Endothelial cell of umbilical vein (primary cell): ENCODE measurements at regions of chr9 and their contacts with region 1.

Region 1: GRCh38 chr9:110048403-110048975 is 159.5 kb downstream of the C9orf152 start:
- DNase-seq: peak; percentile 88
- H3K4me3 ChIP-seq: peak overlapping the region; percentile 99 to 100 (median 100)
- H3K27ac ChIP-seq: peak overlapping the region; percentile 98
- H3K4me1 ChIP-seq: peaks cover 28% of the 10 kb centered on the region
- H3K27me3 ChIP-seq: no peaks in the 10 kb centered on the region
- CTCF ChIP-seq: no peak
- POLR2A ChIP-seq: peak; percentile 96

Region 2: DNA sequence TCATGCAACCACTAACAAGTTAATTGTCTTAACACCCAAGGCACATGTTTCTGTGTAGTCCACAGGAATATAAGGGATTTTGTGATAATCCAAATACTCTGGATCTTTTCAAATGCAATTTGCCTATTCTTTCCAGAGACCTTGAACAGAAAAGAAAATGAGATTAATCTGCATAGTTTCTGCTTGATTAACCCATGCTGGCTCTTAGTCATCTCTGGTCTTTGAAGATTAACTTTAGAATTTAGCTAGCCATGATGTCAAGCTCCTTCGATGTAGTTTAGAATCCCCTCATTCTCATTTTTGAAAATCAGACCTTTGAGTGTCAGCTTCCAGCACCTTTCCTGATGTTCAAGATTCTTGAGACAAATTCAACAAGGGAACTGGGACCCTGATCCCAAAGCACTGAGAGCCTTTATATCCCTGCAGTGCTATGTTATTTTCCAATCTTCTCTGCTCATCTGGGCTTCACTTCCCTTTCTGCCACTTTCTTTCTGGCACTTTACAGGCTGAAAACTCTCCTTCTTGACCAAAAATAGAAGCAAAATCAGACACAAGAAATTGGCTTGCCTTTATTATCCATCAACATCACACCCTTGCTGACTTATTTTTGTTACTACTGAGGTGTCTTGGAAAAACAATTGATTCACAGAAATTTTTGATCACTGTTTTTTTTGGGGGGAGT is 112.9 kb before region 1 on chr9:
- CTCF ChIA-PET with region 1: no interaction called
- POLR2A ChIA-PET with region 1: no interaction called
- dilution Hi-C with region 1: no loop called
- intact Hi-C with region 1: no loop called
- DNase-seq: no peak
- H3K4me3 ChIP-seq: no peak overlapping the region
- H3K27ac ChIP-seq: no peak overlapping the region
- H3K4me1 ChIP-seq: no peaks in the 10 kb centered on the region
- H3K27me3 ChIP-seq: no peaks in the 10 kb centered on the region
- CTCF ChIP-seq: no peak
- POLR2A ChIP-seq: no peak

Region 3: DNA sequence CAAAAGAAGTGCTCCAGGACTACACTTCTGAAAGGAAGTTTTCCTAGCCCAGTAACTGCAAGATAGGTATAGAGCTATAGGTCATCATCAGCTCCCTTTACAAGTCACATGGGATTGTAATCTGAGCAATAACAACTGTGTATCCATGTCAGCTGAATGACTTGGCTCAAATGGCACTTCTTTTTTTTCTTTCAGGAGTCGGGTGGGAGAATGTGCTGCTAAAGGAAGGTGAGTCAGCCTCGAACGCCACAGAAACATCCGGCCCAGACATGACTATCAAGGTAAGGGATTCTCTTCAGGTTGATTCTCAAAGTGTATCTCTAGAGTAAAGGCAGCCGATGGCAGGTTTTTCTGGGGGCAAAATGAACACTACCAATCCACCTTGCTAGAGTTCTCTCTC is 32.7 kb before region 1 on chr9:
- CTCF ChIA-PET with region 1: no interaction called
- POLR2A ChIA-PET with region 1: interaction called, 5 read pairs
- dilution Hi-C with region 1: no loop called
- intact Hi-C with region 1: loop called (anchors 1 kb)
- DNase-seq: peak; percentile 95
- H3K4me3 ChIP-seq: no peak overlapping the region
- H3K27ac ChIP-seq: peak overlapping the region; percentile 100
- H3K4me1 ChIP-seq: peaks cover 28% of the 10 kb centered on the region
- H3K27me3 ChIP-seq: no peaks in the 10 kb centered on the region
- CTCF ChIP-seq: no peak
- POLR2A ChIP-seq: no peak

Region 4: GRCh38 chr9:110029429-110029955 is 19.0 kb before region 1 on chr9:
- CTCF ChIA-PET with region 1: interaction called, 7 read pairs
- POLR2A ChIA-PET with region 1: interaction called, 16 read pairs
- dilution Hi-C with region 1: no loop called
- intact Hi-C with region 1: loop called (anchors 1 kb)
- DNase-seq: peak; percentile 91
- H3K4me3 ChIP-seq: peak overlapping the region in 1 of 3 experiments; percentile 1
- H3K27ac ChIP-seq: peak overlapping the region; percentile 97
- H3K4me1 ChIP-seq: peaks cover 57% of the 10 kb centered on the region
- H3K27me3 ChIP-seq: no peaks in the 10 kb centered on the region
- CTCF ChIP-seq: no peak
- POLR2A ChIP-seq: peak; percentile 63